CD8-positive, alpha-beta T cell (primary cell): ENCODE measurements at regions of chr22 and their contacts with region 1.

Region 1: DNA sequence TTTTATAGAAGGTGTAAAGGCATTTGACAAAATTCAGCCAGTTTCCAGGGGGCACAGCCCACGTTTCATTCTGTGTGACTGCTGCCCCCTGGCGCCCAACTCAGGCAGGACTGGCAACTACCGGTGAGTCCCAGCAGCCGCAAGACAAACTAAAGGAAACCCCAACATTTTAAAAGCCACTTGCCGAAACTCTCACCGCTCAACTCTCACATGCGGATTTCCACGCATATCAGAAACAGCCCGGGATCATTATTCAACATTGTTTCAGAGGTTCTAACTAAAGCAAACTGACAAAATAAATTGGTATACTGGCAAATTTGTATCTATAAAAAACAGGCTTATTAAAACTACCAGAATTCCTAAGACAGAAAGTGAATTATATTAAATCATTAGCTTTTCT is 48.2 kb downstream of the MORC2 start:
- DNase-seq: peak; percentile 66 to 91 (median 86)
- ATAC-seq: peak; percentile 77
- H3K4me3 ChIP-seq: no peak overlapping the region
- H3K4me3 Mint-ChIP-seq: peak overlapping the region; percentile 64
- H3K27ac ChIP-seq: no peak overlapping the region
- H3K27ac Mint-ChIP-seq: peak overlapping the region; percentile 55
- H3K4me1 ChIP-seq: peaks cover 26% of the 10 kb centered on the region
- H3K4me1 Mint-ChIP-seq: peaks cover 31% of the 10 kb centered on the region
- H3K27me3 ChIP-seq: no peaks in the 10 kb centered on the region
- H3K27me3 Mint-ChIP-seq: no peaks in the 10 kb centered on the region
- CTCF ChIP-seq: peak; percentile 96

Region 2: DNA sequence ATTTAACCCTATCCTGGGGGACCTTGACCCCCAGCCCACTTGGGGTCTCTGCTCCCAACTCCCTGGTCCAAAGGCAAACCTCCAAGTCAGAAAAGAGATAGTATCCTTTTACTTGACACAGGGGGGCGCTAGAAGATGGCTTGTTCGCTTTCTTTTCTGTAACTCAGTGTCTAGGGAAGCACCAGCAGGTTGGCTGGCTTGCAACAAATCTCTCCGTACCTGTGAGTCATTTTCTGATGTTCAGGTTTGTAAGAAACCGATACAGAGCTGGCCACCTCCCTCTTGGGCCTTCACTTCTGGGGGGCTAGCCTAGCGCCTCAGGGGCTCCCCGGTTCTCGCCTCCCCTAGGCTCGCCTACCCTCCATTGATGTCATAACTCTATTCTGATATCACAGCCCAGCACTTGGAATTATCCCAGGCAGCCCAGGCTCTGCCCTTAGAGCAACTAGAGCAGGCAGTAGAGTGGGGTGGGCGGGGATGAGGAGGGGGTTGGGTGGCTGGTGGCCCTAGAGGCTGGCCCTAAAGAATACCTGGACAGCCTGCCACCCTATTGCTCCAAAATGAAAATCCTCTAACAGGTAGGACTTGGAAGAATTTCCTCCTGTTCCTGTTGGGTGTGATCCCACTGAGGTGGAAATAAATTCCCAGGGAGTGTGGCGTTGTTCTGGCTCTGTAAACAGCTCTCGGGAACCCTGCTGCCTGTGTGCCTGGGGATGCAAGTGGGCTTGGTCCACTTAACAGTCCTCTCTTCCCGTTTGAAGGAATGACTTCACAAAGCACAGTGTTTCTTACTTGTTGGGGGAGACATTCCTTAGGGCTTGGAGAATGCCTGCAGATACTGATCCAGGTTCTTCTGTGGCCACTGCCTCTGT is 156.4 kb before region 1 on chr22:
- CTCF ChIA-PET with region 1: interaction called, 10 read pairs
- POLR2A ChIA-PET with region 1: no interaction called
- intact Hi-C with region 1: loop called (anchors 1 kb)
- DNase-seq: peak in 8 of 9 experiments; percentile 7 to 78 (median 48)
- ATAC-seq: peak; percentile 90
- H3K4me3 ChIP-seq: no peak overlapping the region
- H3K4me3 Mint-ChIP-seq: no peak overlapping the region
- H3K27ac ChIP-seq: no peak overlapping the region
- H3K27ac Mint-ChIP-seq: no peak overlapping the region
- H3K4me1 ChIP-seq: no peaks in the 10 kb centered on the region
- H3K4me1 Mint-ChIP-seq: peaks cover 2% of the 10 kb centered on the region
- H3K27me3 ChIP-seq: no peaks in the 10 kb centered on the region
- H3K27me3 Mint-ChIP-seq: no peaks in the 10 kb centered on the region
- CTCF ChIP-seq: peak; percentile 52

Region 3: DNA sequence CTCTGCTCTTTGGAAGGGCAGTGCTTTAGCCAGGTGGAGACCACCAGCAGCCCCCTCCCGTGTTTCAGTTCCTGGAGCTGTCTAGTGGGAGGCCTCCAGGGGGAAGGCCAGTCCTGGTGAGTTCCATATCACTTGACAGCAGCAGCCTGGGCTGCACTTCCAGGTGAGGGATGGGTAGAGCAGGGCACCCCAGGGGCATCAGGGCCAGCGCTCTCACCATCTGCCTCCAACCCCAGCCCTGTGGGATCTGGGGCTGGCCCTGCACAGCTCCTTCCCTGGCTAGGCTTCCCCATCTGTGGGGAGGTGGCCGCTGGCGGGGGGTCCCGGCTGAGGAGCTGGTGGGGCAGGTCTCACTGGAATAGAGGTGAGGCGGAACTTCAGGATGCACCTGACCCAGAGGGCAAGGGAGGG is 12.4 kb before region 1 on chr22:
- CTCF ChIA-PET with region 1: interaction called, 28 read pairs
- POLR2A ChIA-PET with region 1: interaction called, 3 read pairs
- intact Hi-C with region 1: no loop called
- DNase-seq: peak in 1 of 9 experiments; percentile 34
- ATAC-seq: no peak
- H3K4me3 ChIP-seq: no peak overlapping the region
- H3K4me3 Mint-ChIP-seq: no peak overlapping the region
- H3K27ac ChIP-seq: no peak overlapping the region
- H3K27ac Mint-ChIP-seq: no peak overlapping the region
- H3K4me1 ChIP-seq: no peaks in the 10 kb centered on the region
- H3K4me1 Mint-ChIP-seq: peaks cover under 1% of the 10 kb centered on the region
- H3K27me3 ChIP-seq: no peaks in the 10 kb centered on the region
- H3K27me3 Mint-ChIP-seq: no peaks in the 10 kb centered on the region
- CTCF ChIP-seq: no peak

Region 4: GRCh38 chr22:30940685-30941362 is 20.4 kb after region 1 on chr22:
- CTCF ChIA-PET with region 1: interaction called, 45 read pairs
- POLR2A ChIA-PET with region 1: interaction called, 7 read pairs
- intact Hi-C with region 1: loop called in 1 of 2 experiments (anchors 2 kb)
- DNase-seq: peak in 8 of 9 experiments; percentile 35 to 79 (median 48)
- ATAC-seq: peak; percentile 74
- H3K4me3 ChIP-seq: peak overlapping the region; percentile 38
- H3K4me3 Mint-ChIP-seq: peak overlapping the region; percentile 77
- H3K27ac ChIP-seq: peak overlapping the region; percentile 60 to 78
- H3K27ac Mint-ChIP-seq: peak overlapping the region; percentile 90
- H3K4me1 ChIP-seq: peaks cover 74% of the 10 kb centered on the region
- H3K4me1 Mint-ChIP-seq: peaks cover 87% of the 10 kb centered on the region
- H3K27me3 ChIP-seq: no peaks in the 10 kb centered on the region
- H3K27me3 Mint-ChIP-seq: no peaks in the 10 kb centered on the region
- CTCF ChIP-seq: no peak

Region 5: GRCh38 chr22:31160328-31160978 is 240.0 kb after region 1 on chr22:
- CTCF ChIA-PET with region 1: no interaction called
- POLR2A ChIA-PET with region 1: no interaction called
- intact Hi-C with region 1: loop called in 1 of 2 experiments (anchors 2 kb)
- DNase-seq: peak in 6 of 9 experiments; percentile 11 to 55 (median 28)
- ATAC-seq: peak; percentile 34
- H3K4me3 ChIP-seq: peak overlapping the region; percentile 78 to 86
- H3K4me3 Mint-ChIP-seq: peak overlapping the region; percentile 100
- H3K27ac ChIP-seq: peak overlapping the region; percentile 72 to 90
- H3K27ac Mint-ChIP-seq: peak overlapping the region; percentile 98
- H3K4me1 ChIP-seq: peaks cover 26% of the 10 kb centered on the region
- H3K4me1 Mint-ChIP-seq: peaks cover 38% of the 10 kb centered on the region
- H3K27me3 ChIP-seq: no peaks in the 10 kb centered on the region
- H3K27me3 Mint-ChIP-seq: no peaks in the 10 kb centered on the region
- CTCF ChIP-seq: no peak